ENCODE measurements at regions of chr18 and their contacts with region 1.

Region 1: DNA sequence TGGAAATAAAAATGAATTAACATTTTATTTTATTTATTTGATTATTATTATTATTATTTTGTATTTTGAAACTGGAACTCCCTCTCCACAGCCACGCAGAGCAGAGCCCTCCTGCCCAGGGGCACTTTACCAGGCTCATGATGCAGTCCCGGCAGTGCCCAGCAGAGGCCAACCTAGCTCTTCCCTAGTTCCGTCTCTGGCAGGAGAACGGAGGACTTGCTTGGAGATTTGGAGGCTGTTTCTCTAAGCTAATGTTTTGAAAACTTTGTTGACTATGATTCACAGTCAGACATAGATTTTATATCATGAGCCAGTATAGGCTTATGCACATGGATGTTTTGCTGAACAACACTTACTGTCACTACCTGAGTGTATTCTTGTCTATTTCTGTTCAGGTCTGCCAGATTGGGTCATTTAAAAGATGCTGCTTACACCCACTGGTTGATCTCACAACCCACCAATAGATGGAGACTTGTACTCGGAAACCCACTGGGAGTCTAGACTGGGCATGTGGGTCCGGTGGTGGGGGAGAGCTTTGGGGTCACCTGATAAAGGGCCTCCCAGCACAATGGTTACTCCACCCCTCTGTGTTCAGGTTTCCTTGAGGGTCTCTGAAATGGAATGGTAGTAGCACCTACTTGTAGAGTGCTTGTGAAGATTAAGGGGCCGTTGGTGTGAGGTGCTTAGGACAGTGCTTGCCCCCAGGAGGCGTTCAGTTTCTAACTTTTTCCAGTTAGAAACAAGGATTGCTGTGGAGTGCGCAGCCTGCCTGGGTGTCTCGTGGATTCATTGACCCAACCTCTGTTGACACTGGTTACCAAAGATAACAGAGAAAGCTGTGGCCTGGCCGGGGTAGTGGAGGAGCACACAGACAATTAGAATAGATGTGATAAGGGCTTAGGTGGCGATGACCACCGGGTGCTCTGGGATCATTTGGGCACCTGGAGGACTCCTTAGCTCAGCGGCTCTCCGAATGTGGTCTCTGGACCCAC is 177.3 kb downstream of the HAUS1 start:
- DNase-seq: no peak
- H3K4me3 ChIP-seq: no peak overlapping the region
- CTCF ChIP-seq: peak; percentile 97

Region 2: GRCh38 chr18:45839414-45840395 is 441.8 kb before region 1 on chr18:
- CTCF ChIA-PET with region 1: no interaction called
- POLR2A ChIA-PET with region 1: no interaction called
- DNase-seq: no peak
- H3K4me3 ChIP-seq: no peak overlapping the region
- CTCF ChIP-seq: peak; percentile 81

Region 3: GRCh38 chr18:46133534-46133933 is 147.9 kb before region 1 on chr18:
- CTCF ChIA-PET with region 1: no interaction called
- POLR2A ChIA-PET with region 1: no interaction called
- DNase-seq: no peak
- H3K4me3 ChIP-seq: no peak overlapping the region
- CTCF ChIP-seq: no peak

Region 4: GRCh38 chr18:46264235-46264893 is 17.1 kb before region 1 on chr18:
- CTCF ChIA-PET with region 1: interaction called, 17 read pairs
- POLR2A ChIA-PET with region 1: no interaction called
- DNase-seq: no peak
- H3K4me3 ChIP-seq: no peak overlapping the region
- CTCF ChIP-seq: no peak

Region 5: GRCh38 chr18:46481048-46481846 is 199.8 kb after region 1 on chr18:
- CTCF ChIA-PET with region 1: interaction called, 82 read pairs
- POLR2A ChIA-PET with region 1: interaction called, 3 read pairs
- DNase-seq: no peak
- H3K4me3 ChIP-seq: no peak overlapping the region
- CTCF ChIP-seq: peak; percentile 56

Region 6: GRCh38 chr18:46622999-46623398 is 341.5 kb after region 1 on chr18:
- CTCF ChIA-PET with region 1: interaction called, 50 read pairs
- POLR2A ChIA-PET with region 1: no interaction called
- DNase-seq: no peak
- H3K4me3 ChIP-seq: no peak overlapping the region
- CTCF ChIP-seq: no peak